Cardiac septum (tissue), 1 donor: ENCODE measurements at regions of chr2 and their contacts with region 1.

Region 1: GRCh38 chr2:96509114-96509846 is 4.1 kb upstream of the NEURL3 start:
- DNase-seq: peak; percentile 94

Region 2: GRCh38 chr2:96138179-96139145 is 370.8 kb before region 1 on chr2 and contains the start of gene ASTL:
- intact Hi-C with region 1: loop called (anchors 10 kb)
- DNase-seq: no peak
- total RNA-seq, gene ASTL: not detected

Region 3: GRCh38 chr2:96345438-96345837 is 163.8 kb before region 1 on chr2:
- intact Hi-C with region 1: loop called (anchors 5 kb)
- DNase-seq: no peak

Region 4: GRCh38 chr2:96407041-96407918 is 102.0 kb before region 1 on chr2:
- intact Hi-C with region 1: loop called (anchors 1 kb)
- DNase-seq: peak; percentile 41